Activated B cell treated with CpG ODN at 0.5 μM for 24 hours (primary cell): ENCODE measurements at regions of chr6 and their contacts with region 1.

Region 1: GRCh38 chr6:111605100-111605751 is 452 bp downstream of the TRAF3IP2 start:
- DNase-seq: peak; percentile 23
- ATAC-seq: peak; percentile 43
- H3K4me3 Mint-ChIP-seq: peak overlapping the region; percentile 90
- H3K27ac Mint-ChIP-seq: peak overlapping the region; percentile 92
- H3K4me1 Mint-ChIP-seq: peaks cover 44% of the 10 kb centered on the region
- H3K27me3 Mint-ChIP-seq: no peaks in the 10 kb centered on the region
- CTCF ChIP-seq: no peak

Region 2: GRCh38 chr6:111377558-111378120 is 227.6 kb before region 1 on chr6:
- CTCF ChIA-PET with region 1: no interaction called
- POLR2A ChIA-PET with region 1: no interaction called
- intact Hi-C with region 1: no loop called
- DNase-seq: no peak
- ATAC-seq: no peak
- H3K4me3 Mint-ChIP-seq: no peak overlapping the region
- H3K27ac Mint-ChIP-seq: no peak overlapping the region
- H3K4me1 Mint-ChIP-seq: no peaks in the 10 kb centered on the region
- H3K27me3 Mint-ChIP-seq: no peaks in the 10 kb centered on the region
- CTCF ChIP-seq: no peak

Region 3: DNA sequence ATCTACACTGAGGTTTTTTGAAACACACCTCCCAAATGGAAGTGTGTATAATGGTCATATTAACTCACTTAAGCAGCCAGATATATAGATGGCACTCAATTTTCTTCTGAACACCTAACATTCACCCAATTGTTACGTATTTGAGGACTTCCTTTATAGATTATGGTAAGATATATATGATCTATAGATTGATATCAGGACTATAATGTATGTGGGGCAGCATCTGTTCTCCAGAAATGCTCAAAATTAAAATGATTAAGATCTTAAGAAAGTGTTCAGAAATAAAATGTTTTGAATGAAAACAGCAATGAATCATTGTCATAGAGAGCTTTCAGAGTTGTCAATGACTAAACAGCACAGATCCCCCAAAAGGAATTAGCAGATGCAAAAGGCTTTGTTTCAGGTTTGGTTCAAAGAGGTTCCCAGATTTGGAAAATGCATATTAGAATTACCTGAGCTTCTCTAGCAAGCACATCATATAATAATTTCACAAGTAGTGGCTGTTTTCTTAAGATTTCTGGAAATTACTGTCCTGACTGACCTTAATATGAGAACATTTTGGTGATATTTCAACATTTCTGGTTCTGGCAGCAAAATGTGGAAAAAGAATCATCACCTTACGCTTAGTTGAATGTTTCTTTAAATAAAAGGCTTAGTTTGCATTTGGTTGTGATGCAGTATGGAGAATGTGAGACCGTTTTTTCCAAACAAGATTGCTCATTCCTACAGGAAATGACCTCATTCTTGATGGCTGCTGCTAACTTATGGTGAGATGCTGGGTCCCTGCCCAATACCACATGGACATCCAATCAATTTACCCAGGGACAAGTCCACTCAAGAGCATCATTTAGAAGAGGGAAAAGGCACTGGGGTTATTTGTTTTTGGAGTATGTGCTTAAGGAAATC is 31.1 kb before region 1 on chr6:
- CTCF ChIA-PET with region 1: no interaction called
- POLR2A ChIA-PET with region 1: interaction called, 10 read pairs
- intact Hi-C with region 1: no loop called
- DNase-seq: no peak
- ATAC-seq: no peak
- H3K4me3 Mint-ChIP-seq: no peak overlapping the region
- H3K27ac Mint-ChIP-seq: peak overlapping the region; percentile 79
- H3K4me1 Mint-ChIP-seq: peaks cover 24% of the 10 kb centered on the region
- H3K27me3 Mint-ChIP-seq: no peaks in the 10 kb centered on the region
- CTCF ChIP-seq: no peak